Activated B cell treated with CpG ODN at 0.5 μM for 24 hours (primary cell): ENCODE measurements at regions of chr16 and their contacts with region 1.

Region 1: GRCh38 chr16:17070882-17071592 is 399.7 kb downstream of the XYLT1 start:
- DNase-seq: peak; percentile 67
- ATAC-seq: peak; percentile 82
- H3K4me3 Mint-ChIP-seq: peak overlapping the region; percentile 88
- H3K27ac Mint-ChIP-seq: peak overlapping the region; percentile 98
- H3K4me1 Mint-ChIP-seq: peaks cover 59% of the 10 kb centered on the region
- H3K27me3 Mint-ChIP-seq: no peaks in the 10 kb centered on the region
- CTCF ChIP-seq: no peak

Region 2: GRCh38 chr16:16828913-16829398 is 242.1 kb before region 1 on chr16:
- CTCF ChIA-PET with region 1: no interaction called
- POLR2A ChIA-PET with region 1: no interaction called
- intact Hi-C with region 1: no loop called
- DNase-seq: no peak
- ATAC-seq: no peak
- H3K4me3 Mint-ChIP-seq: no peak overlapping the region
- H3K27ac Mint-ChIP-seq: no peak overlapping the region
- H3K4me1 Mint-ChIP-seq: no peaks in the 10 kb centered on the region
- H3K27me3 Mint-ChIP-seq: no peaks in the 10 kb centered on the region
- CTCF ChIP-seq: no peak

Region 3: GRCh38 chr16:17026600-17027242 is 44.3 kb before region 1 on chr16:
- CTCF ChIA-PET with region 1: no interaction called
- POLR2A ChIA-PET with region 1: interaction called, 15 read pairs
- intact Hi-C with region 1: loop called (anchors 1 kb)
- DNase-seq: no peak
- ATAC-seq: peak; percentile 62
- H3K4me3 Mint-ChIP-seq: peak overlapping the region; percentile 21
- H3K27ac Mint-ChIP-seq: peak overlapping the region; percentile 81
- H3K4me1 Mint-ChIP-seq: peaks cover 53% of the 10 kb centered on the region
- H3K27me3 Mint-ChIP-seq: no peaks in the 10 kb centered on the region
- CTCF ChIP-seq: no peak